PC-9 (cell line): ENCODE measurements at regions of chr5 and their contacts with region 1.

Region 1: GRCh38 chr5:99032234-99033013 is 103.6 kb upstream of the CHD1 start:
- DNase-seq: peak; percentile 42 to 68
- H3K4me3 ChIP-seq: no peak overlapping the region
- H3K27ac ChIP-seq: no peak overlapping the region
- H3K4me1 ChIP-seq: peaks cover 33% of the 10 kb centered on the region
- H3K27me3 ChIP-seq: no peaks in the 10 kb centered on the region
- CTCF ChIP-seq: peak; percentile 77

Region 2: GRCh38 chr5:98905857-98906690 is 126.3 kb before region 1 on chr5:
- CTCF ChIA-PET with region 1: no interaction called
- POLR2A ChIA-PET with region 1: no interaction called
- intact Hi-C with region 1: loop called (anchors 1 kb)
- DNase-seq: no peak
- H3K4me3 ChIP-seq: no peak overlapping the region
- H3K27ac ChIP-seq: no peak overlapping the region
- H3K4me1 ChIP-seq: 0 out of 2 replicates have a peak, but pooled peaks cover 6% of the 10 kb centered on the region
- H3K27me3 ChIP-seq: no peaks in the 10 kb centered on the region
- CTCF ChIP-seq: peak; percentile 90

Region 3: DNA sequence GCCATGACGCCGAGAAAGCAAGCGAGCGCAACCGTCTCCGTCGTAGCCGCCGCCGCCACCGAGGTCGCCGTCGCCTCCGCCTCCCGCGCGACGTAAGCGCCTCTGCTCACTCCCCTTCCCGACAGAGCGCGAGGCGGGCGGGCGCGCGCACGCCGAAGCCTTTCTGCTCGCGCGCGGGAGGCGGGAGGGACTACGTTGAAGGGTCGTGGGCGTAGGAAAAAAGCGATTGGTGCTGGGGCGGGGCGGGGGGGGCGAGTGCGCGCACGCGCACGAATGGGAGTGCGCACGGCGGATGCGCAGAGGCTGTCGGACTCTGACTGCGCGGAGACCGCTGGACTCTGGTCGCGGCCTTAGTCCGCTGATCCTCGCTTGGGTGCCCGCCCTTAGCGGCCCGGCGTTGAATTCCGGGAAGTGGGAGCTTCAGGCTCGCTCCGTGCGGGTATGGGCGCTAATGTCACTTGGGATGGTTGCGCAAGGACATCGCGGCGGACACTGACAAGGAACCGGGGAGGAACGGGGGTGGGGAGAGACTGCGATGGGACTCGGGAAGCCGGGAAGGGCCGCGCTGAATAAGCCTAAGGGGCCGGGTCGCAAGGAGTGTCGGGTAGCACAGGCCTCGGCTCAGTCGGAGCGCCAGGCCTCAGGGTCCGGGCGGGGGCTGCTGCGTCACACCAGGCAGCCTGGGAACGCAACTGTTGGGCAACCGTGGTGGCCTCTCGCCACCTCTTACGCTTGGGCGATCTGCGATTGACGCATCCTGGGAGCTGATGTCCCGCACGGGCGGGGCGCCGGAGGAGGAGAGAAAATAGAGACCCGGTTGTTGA is 103.3 kb before region 1 on chr5 and contains the start of gene CHD1:
- CTCF ChIA-PET with region 1: no interaction called
- POLR2A ChIA-PET with region 1: interaction called, 6 read pairs
- intact Hi-C with region 1: loop called (anchors 2 kb)
- DNase-seq: peak; percentile 90 to 92
- H3K4me3 ChIP-seq: peak within 1 kb of the TSS; percentile 95
- H3K27ac ChIP-seq: peak within 1 kb of the TSS; percentile 99
- H3K4me1 ChIP-seq: peaks cover 29% of the 10 kb centered on the region
- H3K27me3 ChIP-seq: no peaks in the 10 kb centered on the region
- CTCF ChIP-seq: no peak
- total RNA-seq, gene CHD1: 23.3 and 30.5 TPM in 2 replicates

Region 4: DNA sequence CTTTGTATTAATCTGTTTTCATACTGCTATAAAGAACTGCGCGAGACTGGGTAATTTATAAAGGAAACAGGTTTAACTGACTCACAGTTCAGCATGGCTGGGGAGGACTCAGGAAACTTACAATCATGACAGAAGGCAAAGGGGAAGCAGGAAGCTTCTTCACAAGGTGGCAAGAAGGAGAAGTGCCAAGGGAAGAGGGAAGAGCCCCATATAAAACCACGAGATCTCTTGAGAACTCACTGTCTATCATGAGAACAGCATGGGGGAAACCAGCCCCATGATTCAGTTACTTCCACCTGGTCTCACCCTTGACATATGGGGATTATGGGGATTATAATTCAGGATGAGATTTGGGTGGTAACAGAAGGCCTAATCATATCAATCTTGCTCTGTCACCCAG is 42.7 kb before region 1 on chr5:
- CTCF ChIA-PET with region 1: no interaction called
- POLR2A ChIA-PET with region 1: interaction called, 15 read pairs
- intact Hi-C with region 1: no loop called
- DNase-seq: no peak
- H3K4me3 ChIP-seq: no peak overlapping the region
- H3K27ac ChIP-seq: no peak overlapping the region
- H3K4me1 ChIP-seq: no peaks in the 10 kb centered on the region
- H3K27me3 ChIP-seq: no peaks in the 10 kb centered on the region
- CTCF ChIP-seq: no peak

Region 5: DNA sequence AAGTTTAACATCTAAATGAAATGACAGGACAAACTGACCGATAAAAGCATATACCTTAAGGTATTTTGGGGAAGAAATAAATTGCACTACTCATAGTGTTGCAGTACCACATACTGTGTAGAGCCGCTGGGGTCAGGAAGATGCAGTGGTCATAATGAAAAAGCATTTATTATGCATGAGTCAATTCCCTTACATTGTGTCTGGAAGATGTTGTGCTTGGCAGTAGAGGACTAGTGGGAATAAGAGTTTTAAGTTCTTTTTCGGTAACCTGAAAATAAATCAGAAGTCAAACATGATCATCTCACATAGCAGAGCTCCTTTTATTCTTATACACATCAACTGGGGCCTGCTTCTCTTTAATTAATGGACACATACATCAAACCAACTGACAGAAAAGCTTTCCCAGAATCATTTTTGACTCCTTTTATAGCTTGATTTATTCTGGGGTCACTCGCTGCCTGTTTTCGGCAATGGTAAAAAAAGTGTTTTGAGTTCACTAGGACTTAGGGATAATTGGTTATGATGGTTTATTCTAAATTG is 158.9 kb after region 1 on chr5:
- CTCF ChIA-PET with region 1: no interaction called
- POLR2A ChIA-PET with region 1: no interaction called
- intact Hi-C with region 1: no loop called
- DNase-seq: no peak
- H3K4me3 ChIP-seq: no peak overlapping the region
- H3K27ac ChIP-seq: no peak overlapping the region
- H3K4me1 ChIP-seq: no peaks in the 10 kb centered on the region
- H3K27me3 ChIP-seq: no peaks in the 10 kb centered on the region
- CTCF ChIP-seq: no peak